A673 (cell line): ENCODE measurements at regions of chr14 and their contacts with region 1.

Region 1: GRCh38 chr14:67240978-67241414 is 239 bp upstream of the PALS1 start:
- DNase-seq: peak; percentile 99
- H3K4me3 ChIP-seq: peak overlapping the region; percentile 78
- H3K27ac ChIP-seq: peak overlapping the region; percentile 92
- H3K4me1 ChIP-seq: peaks cover 20% of the 10 kb centered on the region
- H3K27me3 ChIP-seq: no peaks in the 10 kb centered on the region
- CTCF ChIP-seq: no peak

Region 2: GRCh38 chr14:67221248-67221981 is 19.6 kb before region 1 on chr14:
- CTCF ChIA-PET with region 1: no interaction called
- POLR2A ChIA-PET with region 1: interaction called, 11 read pairs
- intact Hi-C with region 1: no loop called
- DNase-seq: no peak
- H3K4me3 ChIP-seq: no peak overlapping the region
- H3K27ac ChIP-seq: no peak overlapping the region
- H3K4me1 ChIP-seq: no peaks in the 10 kb centered on the region
- H3K27me3 ChIP-seq: no peaks in the 10 kb centered on the region
- CTCF ChIP-seq: no peak

Region 3: DNA sequence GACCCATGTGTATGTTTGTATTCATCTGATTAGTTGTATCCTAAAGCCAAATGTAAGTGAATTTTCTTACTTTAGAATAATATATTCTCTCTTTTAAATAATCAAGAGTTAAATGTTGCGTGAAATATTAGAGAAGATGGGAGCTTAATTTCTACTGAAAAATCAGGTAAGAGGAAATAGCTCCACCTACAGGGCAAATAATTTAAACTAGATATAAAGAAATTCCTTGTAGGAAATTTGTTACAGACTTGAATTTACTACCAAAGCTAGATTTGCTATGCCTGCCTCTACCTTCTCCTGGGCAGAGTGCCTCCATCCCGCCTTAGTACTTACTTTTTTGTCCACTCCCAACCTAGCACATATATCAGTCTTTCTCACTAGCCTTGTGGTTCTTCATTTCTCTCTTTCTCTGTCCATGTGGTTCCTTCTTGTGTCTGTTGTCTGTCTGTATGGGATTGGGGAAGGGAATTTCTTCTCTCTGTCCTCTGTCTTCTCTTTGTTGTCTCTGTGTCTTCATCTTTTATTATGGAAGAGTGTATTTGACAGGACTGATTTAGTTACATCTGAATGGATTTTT is 45.0 kb after region 1 on chr14:
- CTCF ChIA-PET with region 1: interaction called, 4 read pairs
- POLR2A ChIA-PET with region 1: no interaction called
- intact Hi-C with region 1: loop called (anchors 2 kb)
- DNase-seq: peak; percentile 74
- H3K4me3 ChIP-seq: no peak overlapping the region
- H3K27ac ChIP-seq: peak overlapping the region; percentile 56
- H3K4me1 ChIP-seq: peaks cover 49% of the 10 kb centered on the region
- H3K27me3 ChIP-seq: no peaks in the 10 kb centered on the region
- CTCF ChIP-seq: peak; percentile 67